Right cardiac atrium (tissue), 5 donors: ENCODE measurements at regions of chrX and their contacts with region 1.

Region 1: GRCh38 chrX:70196961-70197805 is 19.9 kb downstream of the DGAT2L6 start:
- DNase-seq: peak in 2 of 3 donors; percentile 22 to 60
- ATAC-seq: peak; percentile 33 to 57
- H3K4me3 ChIP-seq: no peak overlapping the region
- H3K27ac ChIP-seq: no peak overlapping the region
- H3K4me1 ChIP-seq: no peaks in the 10 kb centered on the region
- H3K27me3 ChIP-seq: no peaks in the 10 kb centered on the region

Region 2: DNA sequence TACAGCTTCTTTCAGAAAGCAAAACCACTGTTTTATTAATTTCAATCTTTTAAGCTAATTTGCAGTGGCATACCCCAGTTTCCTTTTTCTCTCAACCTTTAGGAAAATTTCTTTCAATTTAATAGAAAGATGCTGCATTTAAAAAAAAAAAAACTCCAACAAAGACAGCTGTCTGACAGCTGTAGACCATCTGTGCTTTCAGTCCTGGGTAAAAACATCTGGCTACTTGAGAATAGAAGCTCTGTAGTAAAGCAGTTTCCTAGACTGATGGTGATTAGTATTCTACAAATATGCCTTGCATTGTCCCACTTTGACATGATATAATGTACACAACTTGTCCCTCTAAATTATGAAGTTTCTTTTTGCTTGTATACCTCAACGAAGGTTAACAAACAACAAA is 383.5 kb before region 1 on chrX:
- intact Hi-C with region 1: no loop called
- DNase-seq: no peak
- ATAC-seq: no peak
- H3K4me3 ChIP-seq: no peak overlapping the region
- H3K27ac ChIP-seq: no peak overlapping the region
- H3K4me1 ChIP-seq: peaks cover 2% of the 10 kb centered on the region
- H3K27me3 ChIP-seq: no peaks in the 10 kb centered on the region

Region 3: DNA sequence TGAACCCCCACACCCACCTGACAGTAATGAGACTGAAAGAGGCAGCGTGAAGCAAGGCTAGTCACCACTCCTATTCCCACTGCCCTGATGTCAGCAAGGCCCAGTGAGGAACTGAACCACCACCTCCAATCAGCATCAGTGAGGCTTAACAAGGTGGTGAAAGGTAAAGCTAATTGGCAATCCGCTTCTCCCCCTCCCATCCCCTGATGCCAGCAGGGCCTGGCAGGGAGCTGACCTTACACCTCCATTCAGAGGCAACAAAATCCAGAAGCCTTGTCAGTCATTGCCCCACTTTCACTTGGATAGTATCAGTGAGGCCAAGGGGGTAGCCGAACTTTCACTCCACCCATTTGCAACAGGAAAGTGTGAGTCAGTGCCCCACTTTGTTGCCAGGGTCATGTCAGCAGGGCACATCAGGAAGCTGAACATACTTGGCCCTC is 208.2 kb before region 1 on chrX:
- intact Hi-C with region 1: no loop called
- DNase-seq: peak in 1 of 3 donors; percentile 34
- ATAC-seq: peak; percentile 51 to 61
- H3K4me3 ChIP-seq: no peak overlapping the region
- H3K27ac ChIP-seq: peak overlapping the region; percentile 23
- H3K4me1 ChIP-seq: no peaks in the 10 kb centered on the region
- H3K27me3 ChIP-seq: no peaks in the 10 kb centered on the region

Region 4: GRCh38 chrX:70001269-70001668 is 195.9 kb before region 1 on chrX:
- intact Hi-C with region 1: no loop called
- DNase-seq: peak; percentile 45 to 78 (median 75)
- ATAC-seq: peak; percentile 82 to 90
- H3K4me3 ChIP-seq: no peak overlapping the region
- H3K27ac ChIP-seq: peak overlapping the region; percentile 13
- H3K4me1 ChIP-seq: no peaks in the 10 kb centered on the region
- H3K27me3 ChIP-seq: no peaks in the 10 kb centered on the region

Region 5: DNA sequence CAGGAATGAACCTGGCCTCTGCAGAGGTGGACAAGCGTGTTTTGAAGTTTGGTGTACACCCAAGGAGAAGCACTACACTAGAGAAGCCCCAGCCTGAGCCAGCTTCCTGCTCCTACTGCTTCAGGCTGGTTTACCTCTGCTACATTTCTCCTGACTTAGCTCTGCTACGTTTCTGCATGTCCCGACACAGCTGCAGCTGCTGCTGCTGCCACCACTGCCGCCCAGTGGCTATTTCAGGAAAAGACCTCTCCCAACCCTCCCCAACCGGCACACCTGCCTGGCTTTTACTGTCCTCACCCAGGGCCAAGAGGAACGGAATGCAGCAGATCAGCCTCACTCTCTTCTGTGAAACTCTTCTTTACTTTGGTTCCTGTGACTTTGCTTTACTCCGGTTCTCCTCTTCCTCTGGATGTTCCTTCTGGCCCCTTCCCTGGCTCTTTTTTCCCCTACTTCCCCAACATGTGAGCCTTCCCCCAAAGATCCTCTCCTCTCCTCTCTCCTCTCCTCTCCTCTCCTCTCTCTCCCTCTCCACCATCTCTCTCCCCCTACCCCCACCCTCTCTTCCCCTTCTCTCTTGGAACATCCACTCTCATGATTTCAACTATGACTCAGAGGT is 65.9 kb after region 1 on chrX:
- intact Hi-C with region 1: loop called in 2 of 4 experiments (anchors 5 to 10 kb)
- DNase-seq: peak; percentile 31 to 72 (median 50)
- ATAC-seq: peak; percentile 62 to 65
- H3K4me3 ChIP-seq: no peak overlapping the region
- H3K27ac ChIP-seq: no peak overlapping the region
- H3K4me1 ChIP-seq: no peaks in the 10 kb centered on the region
- H3K27me3 ChIP-seq: no peaks in the 10 kb centered on the region